ENCODE measurements at regions of chr9 and their contacts with region 1.

Region 1: GRCh38 chr9:130107234-130107861 is 53.6 kb downstream of the GPR107 start:
- H3K4me3 Mint-ChIP-seq: no peak overlapping the region
- H3K27ac Mint-ChIP-seq: no peak overlapping the region
- H3K4me1 Mint-ChIP-seq: peaks cover 21% of the 10 kb centered on the region
- H3K27me3 Mint-ChIP-seq: no peaks in the 10 kb centered on the region

Region 2: DNA sequence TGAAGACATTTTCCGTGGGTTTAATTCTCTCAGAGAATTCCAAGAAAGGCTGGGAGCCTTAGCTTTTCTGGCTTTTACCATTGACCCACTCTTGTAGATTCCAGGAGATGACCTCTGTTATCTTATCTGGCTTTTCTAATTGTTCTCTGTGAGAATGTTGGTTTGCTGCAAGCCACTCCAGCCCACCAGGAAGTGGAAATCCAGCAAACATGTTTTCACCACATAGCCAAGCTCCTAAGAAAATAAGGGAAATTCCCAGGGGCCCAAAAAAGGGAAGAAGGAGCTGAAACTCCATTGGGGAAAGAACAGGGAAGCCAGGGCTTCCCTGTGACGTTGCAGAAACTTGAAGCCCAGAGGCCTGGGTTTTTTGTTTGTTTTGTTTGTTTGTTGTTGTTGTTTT is 34.0 kb before region 1 on chr9:
- intact Hi-C with region 1: no loop called
- H3K4me3 Mint-ChIP-seq: no peak overlapping the region
- H3K27ac Mint-ChIP-seq: peak overlapping the region; percentile 80
- H3K4me1 Mint-ChIP-seq: peaks cover 32% of the 10 kb centered on the region
- H3K27me3 Mint-ChIP-seq: no peaks in the 10 kb centered on the region

Region 3: GRCh38 chr9:130235897-130236668 is 128.7 kb after region 1 on chr9:
- intact Hi-C with region 1: loop called (anchors 1 kb)
- H3K4me3 Mint-ChIP-seq: peak overlapping the region; percentile 15
- H3K27ac Mint-ChIP-seq: no peak overlapping the region
- H3K4me1 Mint-ChIP-seq: peaks cover 19% of the 10 kb centered on the region
- H3K27me3 Mint-ChIP-seq: peaks cover 3% of the 10 kb centered on the region

Region 4: DNA sequence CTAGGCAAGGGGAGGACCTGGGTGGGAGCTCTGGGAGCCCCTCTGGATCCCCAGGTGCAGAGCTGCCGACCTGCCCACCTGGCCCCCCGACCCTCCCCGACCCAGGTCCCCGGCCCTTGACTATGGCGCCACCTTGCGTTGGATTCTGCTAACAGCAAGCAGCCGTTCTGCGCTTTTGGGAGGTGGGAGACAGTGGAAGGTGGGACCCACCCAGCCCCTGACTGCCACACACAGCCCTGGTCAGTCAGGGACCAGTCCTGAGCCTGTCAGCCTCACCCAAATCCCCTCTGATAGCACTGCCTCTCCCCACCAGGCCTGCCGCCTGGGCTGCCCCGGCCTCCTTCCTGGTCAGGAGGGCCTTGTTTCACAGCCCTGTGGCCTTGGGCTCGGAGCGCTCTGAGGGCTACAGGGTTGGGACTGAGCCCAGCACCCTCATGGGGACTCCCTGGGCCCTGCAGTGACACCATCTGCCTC is 236.1 kb after region 1 on chr9:
- intact Hi-C with region 1: loop called (anchors 5 kb)
- H3K4me3 Mint-ChIP-seq: no peak overlapping the region
- H3K27ac Mint-ChIP-seq: no peak overlapping the region
- H3K4me1 Mint-ChIP-seq: no peaks in the 10 kb centered on the region
- H3K27me3 Mint-ChIP-seq: peaks cover 2% of the 10 kb centered on the region